ENCODE measurements at regions of chr11 and their contacts with region 1.

Region 1: GRCh38 chr11:57345555-57346211 is 7.5 kb downstream of the P2RX3 start:
- DNase-seq: peak; percentile 89
- ATAC-seq: peak; percentile 70
- H3K4me3 Mint-ChIP-seq: peak overlapping the region; percentile 24; the same call in 1 of the 2 replicates
- H3K27ac Mint-ChIP-seq: no peak overlapping the region
- H3K4me1 Mint-ChIP-seq: peaks cover 29% of the 10 kb centered on the region
- H3K27me3 Mint-ChIP-seq: peaks cover 16% of the 10 kb centered on the region
- CTCF ChIP-seq: peak; percentile 89

Region 2: DNA sequence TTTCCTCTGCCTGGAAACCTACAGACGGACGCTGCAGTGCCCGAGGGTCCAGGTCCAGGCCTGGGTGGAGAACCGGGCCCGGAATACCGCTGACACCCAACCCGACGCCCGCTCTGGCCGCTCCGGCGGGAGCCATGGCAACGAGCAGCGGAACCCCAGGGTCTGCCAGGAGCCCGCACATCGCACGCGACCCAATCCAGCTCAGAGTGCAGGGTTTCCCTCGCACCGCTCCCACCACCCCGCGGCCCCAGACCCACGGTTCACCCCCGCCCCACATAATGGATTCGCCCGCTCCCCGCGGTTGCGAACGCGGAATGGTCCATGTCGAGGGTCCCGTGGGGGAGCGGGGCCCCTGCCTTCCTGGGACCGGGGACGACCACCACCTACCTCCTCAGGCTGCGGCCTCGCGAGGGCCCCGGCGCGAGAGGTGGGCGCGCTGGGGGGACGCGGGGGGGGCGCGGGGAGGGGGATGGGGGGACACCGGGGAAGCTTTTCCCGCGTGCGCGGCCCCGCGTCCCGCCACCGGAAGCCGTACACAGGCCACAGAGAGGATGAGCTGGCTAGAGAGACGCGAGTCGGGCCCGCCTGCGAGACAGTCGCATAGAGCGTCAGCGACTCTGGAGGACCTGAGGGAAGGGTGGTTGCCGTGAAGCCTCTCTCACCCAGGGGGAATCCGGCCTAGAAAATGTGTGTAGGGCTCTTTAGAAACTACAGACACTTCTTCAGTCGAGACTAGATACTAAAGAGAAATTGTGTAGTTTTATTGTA is 10.2 kb before region 1 on chr11 and contains the start of gene SSRP1:
- CTCF ChIA-PET with region 1: interaction called, 23 read pairs
- POLR2A ChIA-PET with region 1: no interaction called
- DNase-seq: peak; percentile 79
- ATAC-seq: peak; percentile 94
- H3K4me3 Mint-ChIP-seq: peak within 1 kb of the TSS; percentile 94
- H3K27ac Mint-ChIP-seq: peak within 1 kb of the TSS; percentile 96
- H3K4me1 Mint-ChIP-seq: peaks cover 47% of the 10 kb centered on the region
- H3K27me3 Mint-ChIP-seq: peaks cover 11% of the 10 kb centered on the region
- CTCF ChIP-seq: no peak
- total RNA-seq, gene SSRP1: 218 to 228 TPM (median 223 TPM) in 3 replicates

Region 3: DNA sequence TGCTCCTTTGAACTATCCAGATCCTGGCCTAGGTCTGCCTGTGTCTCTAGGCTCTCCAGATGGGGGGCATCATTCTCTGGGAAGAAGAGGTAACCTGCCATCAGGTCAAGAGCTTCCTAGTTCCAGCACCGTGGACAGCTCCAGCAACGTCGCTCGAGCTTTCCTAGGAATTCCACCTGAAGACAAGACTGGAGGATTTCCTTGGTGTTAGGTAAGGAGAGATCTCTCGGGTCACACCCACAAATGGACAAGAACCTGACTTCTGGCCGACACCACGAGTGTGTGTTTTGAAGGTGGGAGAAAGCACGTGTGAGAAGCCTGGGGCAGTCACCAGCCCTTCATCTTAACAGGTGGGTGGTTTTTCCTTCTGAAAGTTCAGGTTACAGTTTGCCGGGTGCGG is 34.0 kb after region 1 on chr11:
- CTCF ChIA-PET with region 1: interaction called, 22 read pairs
- POLR2A ChIA-PET with region 1: no interaction called
- DNase-seq: peak; percentile 82
- ATAC-seq: peak; percentile 87
- H3K4me3 Mint-ChIP-seq: no peak overlapping the region
- H3K27ac Mint-ChIP-seq: no peak overlapping the region
- H3K4me1 Mint-ChIP-seq: peaks cover 2% of the 10 kb centered on the region; the same call in 1 of the 2 replicates
- H3K27me3 Mint-ChIP-seq: peaks cover 36% of the 10 kb centered on the region
- CTCF ChIP-seq: no peak

Region 4: DNA sequence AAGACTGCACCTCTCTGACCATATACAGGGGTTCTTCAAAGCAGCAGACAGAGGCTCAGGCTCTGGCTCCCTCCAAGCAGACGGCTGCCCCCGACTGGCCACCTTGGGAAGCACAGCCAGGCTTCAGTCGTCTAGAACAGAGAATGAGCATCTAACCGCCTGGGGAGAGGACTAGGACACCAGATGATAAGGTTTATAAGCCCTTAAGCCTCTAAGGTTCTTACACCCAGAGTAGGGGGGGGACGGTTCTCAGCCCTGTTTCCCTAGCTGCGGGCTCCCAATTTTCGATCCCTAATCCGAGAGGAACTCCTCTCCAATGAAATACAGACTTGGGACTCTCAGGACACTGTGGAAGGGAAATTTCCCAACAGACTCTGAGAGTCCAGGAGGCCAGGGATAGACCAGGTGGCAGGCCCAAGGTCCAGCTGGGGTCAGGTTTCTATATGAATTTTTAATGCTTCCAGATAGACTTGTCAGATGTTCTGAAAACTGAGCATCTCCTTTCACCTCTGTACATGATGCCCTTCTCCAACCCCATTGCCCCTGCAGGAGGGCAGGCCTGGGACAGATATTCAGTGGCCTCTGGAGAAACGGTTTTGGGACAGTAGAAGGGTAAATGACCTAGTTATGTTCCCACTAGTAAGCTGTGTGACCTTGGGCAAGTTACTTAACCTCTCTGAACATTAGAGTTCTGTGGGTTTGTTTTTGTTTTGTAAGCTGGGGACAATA is 134.9 kb after region 1 on chr11:
- CTCF ChIA-PET with region 1: interaction called, 29 read pairs
- POLR2A ChIA-PET with region 1: no interaction called
- DNase-seq: peak; percentile 93
- ATAC-seq: peak; percentile 60
- H3K4me3 Mint-ChIP-seq: no peak overlapping the region
- H3K27ac Mint-ChIP-seq: 0 out of 2 replicates have a peak overlapping the region, but pooled peaks have one; percentile 14
- H3K4me1 Mint-ChIP-seq: peaks cover 56% of the 10 kb centered on the region
- H3K27me3 Mint-ChIP-seq: peaks cover 74% of the 10 kb centered on the region
- CTCF ChIP-seq: peak; percentile 73

Region 5: GRCh38 chr11:57530596-57531507 is 185.2 kb after region 1 on chr11 and contains the start of gene TIMM10:
- CTCF ChIA-PET with region 1: interaction called, 25 read pairs
- POLR2A ChIA-PET with region 1: no interaction called
- DNase-seq: peak; percentile 94
- ATAC-seq: peak; percentile 98
- H3K4me3 Mint-ChIP-seq: peak within 1 kb of the TSS; percentile 96
- H3K27ac Mint-ChIP-seq: peak within 1 kb of the TSS; percentile 98
- H3K4me1 Mint-ChIP-seq: peaks cover 18% of the 10 kb centered on the region
- H3K27me3 Mint-ChIP-seq: peaks cover 9% of the 10 kb centered on the region
- CTCF ChIP-seq: no peak
- total RNA-seq, gene TIMM10: 63.5 to 92.8 TPM (median 68.4 TPM) in 3 replicates